Cardiac septum (tissue), 1 donor: ENCODE measurements at regions of chr22 and their contacts with region 1.

Region 1: GRCh38 chr22:38272373-38273134 is at the start of gene TMEM184B:
- DNase-seq: peak; percentile 91
- total RNA-seq, gene TMEM184B: 58.1 TPM

Region 2: GRCh38 chr22:38230108-38230825 is 42.3 kb before region 1 on chr22:
- intact Hi-C with region 1: no loop called
- DNase-seq: no peak

Region 3: GRCh38 chr22:38317122-38317994 is 44.8 kb after region 1 on chr22 and contains the start of gene CSNK1E:
- intact Hi-C with region 1: loop called (anchors 2 kb)
- DNase-seq: peak; percentile 90
- total RNA-seq, gene CSNK1E: 95.7 TPM